ENCODE measurements at regions of chrX and their contacts with region 1.

Region 1: GRCh38 chrX:79081895-79082512 is 62.5 kb upstream of the GPR174 start:
- DNase-seq: no peak
- ATAC-seq: peak in 1 of 4 donors; percentile 49
- H3K4me3 ChIP-seq: no peak overlapping the region
- H3K27ac ChIP-seq: no peak overlapping the region
- H3K4me1 ChIP-seq: peaks cover 4% of the 10 kb centered on the region
- H3K27me3 ChIP-seq: no peaks in the 10 kb centered on the region
- CTCF ChIP-seq: peak; percentile 60

Region 2: GRCh38 chrX:78555401-78555980 is 526.5 kb before region 1 on chrX:
- intact Hi-C with region 1: loop called in 1 of 2 experiments (anchors 5 kb)
- DNase-seq: no peak
- ATAC-seq: no peak
- H3K4me3 ChIP-seq: no peak overlapping the region
- H3K27ac ChIP-seq: no peak overlapping the region
- H3K4me1 ChIP-seq: no peaks in the 10 kb centered on the region
- H3K27me3 ChIP-seq: no peaks in the 10 kb centered on the region
- CTCF ChIP-seq: peak; percentile 36

Region 3: GRCh38 chrX:79117078-79117477 is 35.1 kb after region 1 on chrX:
- intact Hi-C with region 1: no loop called
- DNase-seq: no peak
- ATAC-seq: no peak
- H3K4me3 ChIP-seq: no peak overlapping the region
- H3K27ac ChIP-seq: no peak overlapping the region
- H3K4me1 ChIP-seq: no peaks in the 10 kb centered on the region
- H3K27me3 ChIP-seq: no peaks in the 10 kb centered on the region
- CTCF ChIP-seq: no peak

Region 4: DNA sequence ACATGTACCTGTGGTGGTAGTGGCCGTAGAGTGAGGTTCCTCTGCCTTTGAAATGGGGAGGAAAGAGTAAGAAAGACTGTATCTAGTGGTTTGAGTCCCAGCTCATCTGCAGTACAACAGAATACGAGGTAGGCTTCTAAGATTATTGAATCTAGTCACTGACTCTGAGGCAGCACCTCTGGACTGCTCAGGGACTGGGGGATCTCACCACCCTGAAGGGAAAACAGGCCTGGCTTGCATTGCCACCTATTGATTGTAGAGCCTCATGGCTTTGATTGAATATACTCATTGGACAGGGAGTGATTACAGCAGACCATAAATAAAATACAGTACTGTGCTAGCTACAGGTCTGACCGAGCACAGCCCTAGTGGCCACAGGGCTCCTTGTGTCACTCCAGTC is 113.0 kb after region 1 on chrX:
- intact Hi-C with region 1: no loop called
- DNase-seq: no peak
- ATAC-seq: no peak
- H3K4me3 ChIP-seq: no peak overlapping the region
- H3K27ac ChIP-seq: no peak overlapping the region
- H3K4me1 ChIP-seq: no peaks in the 10 kb centered on the region
- H3K27me3 ChIP-seq: peaks cover 0 to 4% (median 0%) of the 10 kb centered on the region in 3 donors
- CTCF ChIP-seq: no peak